ENCODE measurements at regions of chr22 and their contacts with region 1.

Region 1: GRCh38 chr22:19479357-19480172 is at the start of gene CDC45:
- DNase-seq: peak; percentile 97
- ATAC-seq: peak; percentile 91
- H3K4me3 Mint-ChIP-seq: peak within 1 kb of the TSS; percentile 99
- H3K27ac Mint-ChIP-seq: peak within 1 kb of the TSS; percentile 99
- H3K4me1 Mint-ChIP-seq: peaks cover 45% of the 10 kb centered on the region
- H3K27me3 Mint-ChIP-seq: no peaks in the 10 kb centered on the region
- total RNA-seq, gene CDC45: 103 to 111 TPM

Region 2: DNA sequence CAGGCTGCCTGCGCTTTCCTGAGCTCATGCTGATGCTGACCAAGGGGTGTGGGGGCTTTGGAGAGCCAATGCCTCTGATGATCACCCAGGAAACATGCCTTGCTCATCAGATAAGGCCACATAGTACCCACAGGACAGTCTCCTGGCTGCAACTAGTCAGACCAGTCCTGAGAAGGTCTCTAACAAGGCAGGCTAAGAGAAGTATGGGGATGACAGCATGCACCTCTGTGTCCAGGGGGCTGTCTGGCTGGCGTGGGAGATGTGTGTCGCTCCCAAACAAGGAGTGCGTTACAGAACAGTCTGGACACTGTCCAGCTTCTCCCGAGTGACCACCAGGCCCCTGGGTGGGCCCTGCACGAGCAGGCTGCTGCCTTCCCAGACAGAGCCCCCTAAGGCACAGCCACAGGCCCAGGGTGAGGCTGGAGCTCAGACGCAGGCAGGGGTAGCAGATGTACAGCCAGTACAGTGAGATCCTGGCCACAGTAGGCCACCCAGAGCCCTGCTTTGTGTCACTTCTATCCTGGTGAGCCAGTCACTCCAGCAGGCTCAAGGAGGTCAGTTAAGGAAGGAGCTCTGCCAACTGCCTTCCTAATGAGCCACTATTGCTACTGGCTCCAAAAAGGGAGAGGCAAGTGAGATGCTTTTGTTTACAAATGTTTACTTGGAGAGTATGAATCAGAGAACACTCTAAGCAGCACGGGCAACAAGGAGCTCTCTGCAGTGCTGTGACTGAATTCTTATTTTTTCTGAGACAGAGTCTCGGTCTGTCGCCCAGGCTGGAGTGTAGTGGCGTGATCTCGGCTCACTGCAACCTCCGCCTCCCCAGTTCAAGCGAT is 122.1 kb before region 1 on chr22:
- CTCF ChIA-PET with region 1: no interaction called
- POLR2A ChIA-PET with region 1: no interaction called
- intact Hi-C with region 1: no loop called
- DNase-seq: no peak
- ATAC-seq: no peak
- H3K4me3 Mint-ChIP-seq: no peak overlapping the region
- H3K27ac Mint-ChIP-seq: no peak overlapping the region
- H3K4me1 Mint-ChIP-seq: no peaks in the 10 kb centered on the region
- H3K27me3 Mint-ChIP-seq: no peaks in the 10 kb centered on the region

Region 3: DNA sequence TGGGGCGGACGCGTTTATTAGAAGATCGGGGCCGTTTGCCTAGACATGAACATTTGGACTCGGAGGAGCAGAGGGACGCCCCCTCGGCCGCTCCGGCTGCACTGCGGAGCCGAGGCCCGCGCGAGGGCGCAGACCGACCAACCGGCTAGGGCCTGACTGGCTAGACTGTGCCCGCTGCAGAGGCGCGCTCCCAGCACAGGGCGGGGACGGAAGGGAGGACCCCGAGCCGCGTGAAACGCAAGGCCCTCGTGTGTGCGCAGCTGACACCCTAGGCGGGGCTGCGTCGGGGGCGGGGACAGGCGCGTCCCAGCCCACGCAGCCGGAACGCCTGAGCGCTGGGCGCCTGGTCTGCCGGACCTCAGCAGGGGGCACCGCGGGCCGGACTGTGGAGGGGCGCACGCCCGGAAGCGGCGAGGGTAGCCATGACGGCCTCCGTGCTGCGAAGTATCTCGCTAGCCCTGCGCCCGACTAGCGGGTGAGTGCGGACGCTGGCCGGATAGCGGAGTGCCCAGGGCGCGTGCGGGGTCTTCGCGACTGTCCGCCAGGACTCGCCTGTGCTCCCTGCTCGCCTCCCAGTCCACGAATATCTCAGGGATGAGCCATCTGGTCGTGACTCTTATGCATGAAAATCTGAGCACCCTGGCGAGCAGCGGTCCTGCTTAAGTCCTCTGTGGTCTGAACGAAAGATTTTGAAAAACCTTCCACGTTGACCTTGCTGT is 47.3 kb before region 1 on chr22 and contains the start of gene MRPL40:
- CTCF ChIA-PET with region 1: interaction called, 3 read pairs
- POLR2A ChIA-PET with region 1: interaction called, 8 read pairs
- intact Hi-C with region 1: loop called (anchors 1 kb)
- DNase-seq: peak; percentile 94
- ATAC-seq: peak; percentile 86
- H3K4me3 Mint-ChIP-seq: peak within 1 kb of the TSS; percentile 75
- H3K27ac Mint-ChIP-seq: peak within 1 kb of the TSS; percentile 96
- H3K4me1 Mint-ChIP-seq: peaks cover 43% of the 10 kb centered on the region
- H3K27me3 Mint-ChIP-seq: no peaks in the 10 kb centered on the region
- total RNA-seq, gene MRPL40: 34.1 to 34.4 TPM

Region 4: DNA sequence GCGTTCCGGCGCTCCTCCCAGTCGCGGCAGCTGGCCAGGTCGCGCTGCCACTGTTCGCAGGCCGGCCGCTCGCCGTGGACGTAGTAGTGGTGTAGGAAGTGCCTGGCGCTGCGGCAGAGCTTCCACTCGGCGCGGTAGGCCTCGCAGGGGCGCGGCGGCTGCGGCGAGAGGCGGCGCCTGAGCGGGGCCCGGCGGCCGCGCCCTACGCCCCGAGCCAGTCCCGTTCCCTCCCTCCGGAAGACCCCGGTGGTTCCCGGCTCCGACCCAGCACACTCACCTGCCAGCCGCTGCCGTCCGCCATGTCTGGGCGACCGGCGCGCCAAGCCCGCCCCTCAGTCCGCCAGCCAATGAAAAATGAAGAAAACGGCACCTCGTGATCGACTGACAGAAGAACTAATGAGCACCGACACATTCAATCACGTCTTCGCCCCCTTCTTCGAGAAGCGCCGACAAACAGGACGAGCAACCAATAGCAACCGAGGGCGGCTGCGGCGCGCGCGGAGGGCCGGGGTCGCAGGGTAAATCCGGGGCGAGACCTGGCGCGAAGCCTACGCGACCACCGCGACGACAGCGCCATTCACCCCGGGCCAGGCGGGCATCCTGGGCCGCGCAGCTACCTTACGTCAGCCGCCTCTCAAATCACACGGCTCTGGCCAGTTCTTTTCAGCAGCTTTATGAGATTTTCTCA is 32.0 kb before region 1 on chr22 and contains the start of gene C22orf39:
- CTCF ChIA-PET with region 1: no interaction called
- POLR2A ChIA-PET with region 1: interaction called, 3 read pairs
- intact Hi-C with region 1: loop called (anchors 1 kb)
- DNase-seq: peak; percentile 91
- ATAC-seq: peak; percentile 83
- H3K4me3 Mint-ChIP-seq: peak within 1 kb of the TSS; percentile 87
- H3K27ac Mint-ChIP-seq: peak within 1 kb of the TSS; percentile 98
- H3K4me1 Mint-ChIP-seq: peaks cover 36% of the 10 kb centered on the region
- H3K27me3 Mint-ChIP-seq: no peaks in the 10 kb centered on the region
- total RNA-seq, gene C22orf39: 21.9 to 22.2 TPM

Region 5: GRCh38 chr22:19576460-19577421 is 97.2 kb after region 1 on chr22:
- CTCF ChIA-PET with region 1: no interaction called
- POLR2A ChIA-PET with region 1: interaction called, 3 read pairs
- intact Hi-C with region 1: loop called in 1 of 2 experiments (anchors 1 kb)
- DNase-seq: peak; percentile 86
- ATAC-seq: peak; percentile 88
- H3K4me3 Mint-ChIP-seq: peak overlapping the region; percentile 22
- H3K27ac Mint-ChIP-seq: peak overlapping the region; percentile 91
- H3K4me1 Mint-ChIP-seq: peaks cover 45% of the 10 kb centered on the region
- H3K27me3 Mint-ChIP-seq: no peaks in the 10 kb centered on the region

Region 6: DNA sequence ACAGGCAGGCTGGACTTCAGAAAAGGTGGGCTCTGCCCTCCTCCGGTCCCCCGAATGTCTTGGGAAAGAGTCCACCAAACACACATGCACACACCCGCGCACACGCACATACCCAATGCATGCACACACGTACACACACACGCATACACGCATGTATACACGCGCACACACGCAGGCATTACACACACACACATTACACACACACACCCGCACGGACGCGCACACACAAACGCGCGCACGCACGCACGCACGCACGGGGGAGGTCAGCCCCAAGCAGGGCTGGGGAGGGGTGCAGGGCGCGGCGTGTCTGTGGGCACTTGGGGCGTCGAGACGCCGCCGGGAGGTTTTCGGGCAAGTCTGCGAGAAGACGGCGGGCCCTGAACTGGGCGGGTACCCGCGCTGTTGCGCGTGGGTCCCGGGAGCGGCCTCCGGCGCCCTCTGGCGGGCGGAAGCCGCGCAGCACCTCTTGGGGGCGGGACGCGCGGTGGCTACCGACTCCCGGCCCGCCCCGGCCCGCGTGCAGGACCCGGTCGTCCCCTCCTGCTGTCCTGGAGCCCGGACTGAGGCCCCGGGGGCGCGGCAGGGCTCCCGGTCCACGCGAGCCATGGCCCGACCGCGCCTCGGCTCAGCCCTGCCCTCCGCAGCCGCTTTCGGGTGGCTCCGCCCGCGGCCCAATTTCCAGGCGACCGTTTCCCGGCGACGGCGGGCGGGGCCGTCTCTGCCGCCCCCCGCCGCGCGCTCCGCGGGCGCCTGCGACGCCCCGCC is 238.3 kb after region 1 on chr22:
- CTCF ChIA-PET with region 1: no interaction called
- POLR2A ChIA-PET with region 1: no interaction called
- intact Hi-C with region 1: loop called in 1 of 2 experiments (anchors 2 kb)
- DNase-seq: peak; percentile 87
- ATAC-seq: peak; percentile 92
- H3K4me3 Mint-ChIP-seq: peak overlapping the region; percentile 63
- H3K27ac Mint-ChIP-seq: no peak overlapping the region
- H3K4me1 Mint-ChIP-seq: peaks cover 11% of the 10 kb centered on the region
- H3K27me3 Mint-ChIP-seq: peaks cover 29% of the 10 kb centered on the region